Common myeloid progenitor, CD34-positive (primary cell): ENCODE measurements at regions of chr13 and their contacts with region 1.

Region 1: GRCh38 chr13:102903659-102904407 is 58.0 kb downstream of the ERCC5 start:
- DNase-seq: peak in 2 of 3 donors; percentile 26 to 31
- H3K4me3 ChIP-seq: no peak overlapping the region
- H3K27ac ChIP-seq: no peak overlapping the region
- H3K4me1 ChIP-seq: no peaks in the 10 kb centered on the region
- H3K27me3 ChIP-seq: no peaks in the 10 kb centered on the region

Region 2: GRCh38 chr13:101211261-101211660 is 1692.6 kb before region 1 on chr13:
- CTCF ChIA-PET with region 1: no interaction called
- POLR2A ChIA-PET with region 1: no interaction called
- DNase-seq: no peak
- H3K4me3 ChIP-seq: no peak overlapping the region
- H3K27ac ChIP-seq: no peak overlapping the region
- H3K4me1 ChIP-seq: no peaks in the 10 kb centered on the region
- H3K27me3 ChIP-seq: no peaks in the 10 kb centered on the region

Region 3: GRCh38 chr13:102913914-102914313 is 10.1 kb after region 1 on chr13:
- CTCF ChIA-PET with region 1: interaction called, 13 read pairs
- POLR2A ChIA-PET with region 1: no interaction called
- DNase-seq: peak; percentile 45 to 86 (median 81)
- H3K4me3 ChIP-seq: peak overlapping the region in 1 of 7 experiments; percentile 37
- H3K27ac ChIP-seq: no peak overlapping the region
- H3K4me1 ChIP-seq: peaks cover 0 to 8% (median 0%) of the 10 kb centered on the region in 4 experiments
- H3K27me3 ChIP-seq: peaks cover 0 to 4% (median 0%) of the 10 kb centered on the region in 5 experiments